CD4-positive, alpha-beta memory T cell (primary cell): ENCODE measurements at regions of chr6 and their contacts with region 1.

Region 1: DNA sequence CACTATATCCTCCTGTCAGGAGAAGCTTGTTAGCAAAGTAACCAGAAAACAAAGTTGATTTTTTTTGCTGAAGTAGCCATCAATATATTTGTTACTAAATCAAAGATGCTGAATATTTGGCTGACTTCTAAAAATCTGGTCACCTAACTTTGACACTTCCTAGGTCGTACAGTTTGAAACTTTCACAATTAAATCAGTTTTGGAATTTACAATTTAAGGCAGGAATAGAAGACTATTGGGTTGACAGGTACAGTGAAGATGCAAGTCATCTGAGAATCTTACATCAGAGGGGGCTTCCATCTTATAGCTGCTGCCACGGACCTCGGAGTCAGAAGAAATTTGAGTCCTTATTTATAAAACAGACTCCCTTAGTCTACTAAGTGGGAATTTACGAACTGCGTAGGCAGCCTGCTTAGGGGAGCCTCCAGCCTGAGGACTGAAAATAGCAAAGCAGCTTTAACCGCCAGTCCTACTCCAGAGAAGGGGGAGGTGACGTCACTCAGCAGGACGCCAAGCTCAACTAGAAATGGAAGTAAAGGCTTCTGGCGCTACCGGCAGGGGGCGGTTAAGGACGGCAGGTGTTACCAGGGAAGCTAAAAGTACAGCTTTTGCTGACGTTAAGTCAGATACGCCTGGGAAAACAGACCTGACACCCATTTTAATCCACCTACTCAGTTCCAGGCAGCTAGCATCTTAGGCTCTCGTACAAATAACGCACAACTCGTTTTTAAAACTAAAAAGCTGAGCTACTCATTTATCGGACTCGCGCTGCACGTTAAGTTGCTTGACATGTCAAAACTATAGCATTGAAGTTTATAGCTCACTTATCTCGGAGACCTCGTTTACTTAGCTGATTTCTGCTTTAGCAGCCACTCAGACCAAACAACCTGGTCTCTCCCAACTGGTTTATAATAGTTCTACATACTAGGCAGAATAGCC is 61.1 kb upstream of the HFE start:
- DNase-seq: peak; percentile 90 to 98 (median 94)
- H3K4me3 ChIP-seq: peak overlapping the region; percentile 67 to 74
- H3K4me3 Mint-ChIP-seq: peak overlapping the region; percentile 85 to 98 (median 92)
- H3K27ac ChIP-seq: peak overlapping the region; percentile 89
- H3K27ac Mint-ChIP-seq: peak overlapping the region; percentile 96 to 100 (median 99)
- H3K4me1 ChIP-seq: peaks cover 29% of the 10 kb centered on the region
- H3K4me1 Mint-ChIP-seq: peaks cover 22 to 60% (median 39%) of the 10 kb centered on the region in 4 donors
- H3K27me3 ChIP-seq: no peaks in the 10 kb centered on the region
- H3K27me3 Mint-ChIP-seq: peaks cover 0 to 4% of the 10 kb centered on the region in 2 donors

Region 2: GRCh38 chr6:25962149-25963127 is 63.7 kb before region 1 on chr6 and contains the start of gene TRIM38:
- CTCF ChIA-PET with region 1: no interaction called
- POLR2A ChIA-PET with region 1: interaction called, 41 read pairs
- intact Hi-C with region 1: no loop called
- DNase-seq: peak; percentile 82 to 95 (median 87)
- H3K4me3 ChIP-seq: peak within 1 kb of the TSS; percentile 66 to 90
- H3K4me3 Mint-ChIP-seq: peak within 1 kb of the TSS; percentile 98 to 100 (median 98)
- H3K27ac ChIP-seq: peak within 1 kb of the TSS; percentile 92
- H3K27ac Mint-ChIP-seq: peak within 1 kb of the TSS; percentile 92 to 100 (median 99)
- H3K4me1 ChIP-seq: peaks cover 84% of the 10 kb centered on the region
- H3K4me1 Mint-ChIP-seq: peaks cover 64 to 93% (median 79%) of the 10 kb centered on the region in 4 donors
- H3K27me3 ChIP-seq: no peaks in the 10 kb centered on the region
- H3K27me3 Mint-ChIP-seq: no peaks in the 10 kb centered on the region
- total RNA-seq, gene TRIM38: 37.7 TPM

Region 3: GRCh38 chr6:26054857-26055669 is 28.9 kb after region 1 on chr6:
- CTCF ChIA-PET with region 1: interaction called, 16 read pairs
- POLR2A ChIA-PET with region 1: interaction called, 1,198 read pairs
- intact Hi-C with region 1: loop called (anchors 1 kb)
- DNase-seq: peak; percentile 89 to 96 (median 91)
- H3K4me3 ChIP-seq: peak overlapping the region; percentile 67 to 78
- H3K4me3 Mint-ChIP-seq: peak overlapping the region; percentile 93 to 96 (median 94)
- H3K27ac ChIP-seq: peak overlapping the region; percentile 84
- H3K27ac Mint-ChIP-seq: peak overlapping the region; percentile 91 to 98 (median 98)
- H3K4me1 ChIP-seq: peaks cover 24% of the 10 kb centered on the region
- H3K4me1 Mint-ChIP-seq: peaks cover 7 to 34% (median 15%) of the 10 kb centered on the region in 4 donors
- H3K27me3 ChIP-seq: no peaks in the 10 kb centered on the region
- H3K27me3 Mint-ChIP-seq: no peaks in the 10 kb centered on the region

Region 4: DNA sequence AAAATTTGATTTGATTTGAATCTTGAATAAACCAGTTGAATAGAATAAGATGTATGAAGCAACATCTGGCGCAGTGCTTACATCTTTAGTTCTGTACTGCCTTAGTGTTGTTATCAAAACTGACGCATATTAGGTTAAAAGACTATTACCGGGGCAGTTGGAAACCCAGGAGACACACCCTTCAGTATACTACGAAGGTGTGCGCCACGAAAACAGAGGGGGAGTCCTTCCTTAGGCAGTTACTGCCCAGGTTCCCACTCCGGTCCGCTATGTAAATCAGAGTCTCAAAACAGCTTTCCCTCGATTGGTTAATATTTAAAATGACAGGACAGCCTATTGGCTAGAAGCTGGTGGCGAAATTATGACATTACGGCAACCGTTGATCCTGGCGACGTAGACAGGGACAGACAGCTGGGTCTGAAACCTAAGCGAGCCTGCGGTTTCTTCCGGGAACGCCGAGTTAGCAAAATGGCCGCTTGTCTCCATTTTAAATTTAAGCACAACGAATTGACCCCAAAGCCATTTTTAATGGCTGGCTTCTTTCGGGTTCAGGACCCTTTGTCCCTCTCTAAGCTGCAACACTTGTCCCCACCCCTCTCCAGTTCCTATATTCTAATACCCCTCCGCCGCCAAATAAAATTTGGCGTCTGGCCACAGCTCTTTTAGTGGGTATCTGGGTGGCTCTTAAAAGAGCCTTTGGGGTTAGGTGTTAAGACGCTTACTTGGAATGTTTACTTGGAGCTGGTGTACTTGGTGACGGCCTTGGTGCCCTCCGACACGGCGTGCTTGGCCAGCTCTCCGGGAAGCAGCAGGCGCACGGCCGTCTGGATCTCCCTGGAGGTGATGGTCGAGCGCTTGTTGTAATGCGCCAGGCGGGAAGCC is 96.9 kb after region 1 on chr6:
- CTCF ChIA-PET with region 1: interaction called, 17 read pairs
- POLR2A ChIA-PET with region 1: interaction called, 147 read pairs
- intact Hi-C with region 1: loop called (anchors 1 kb)
- DNase-seq: peak; percentile 94 to 98 (median 98)
- H3K4me3 ChIP-seq: peak overlapping the region; percentile 87 to 98
- H3K4me3 Mint-ChIP-seq: peak overlapping the region; percentile 96 to 100 (median 100)
- H3K27ac ChIP-seq: peak overlapping the region; percentile 89
- H3K27ac Mint-ChIP-seq: peak overlapping the region; percentile 97 to 99 (median 99)
- H3K4me1 ChIP-seq: peaks cover 26% of the 10 kb centered on the region
- H3K4me1 Mint-ChIP-seq: peaks cover 20 to 54% (median 30%) of the 10 kb centered on the region in 4 donors
- H3K27me3 ChIP-seq: no peaks in the 10 kb centered on the region
- H3K27me3 Mint-ChIP-seq: peaks cover 0 to 3% of the 10 kb centered on the region in 2 donors

Region 5: GRCh38 chr6:26216356-26216885 is 190.3 kb after region 1 on chr6:
- CTCF ChIA-PET with region 1: interaction called, 5 read pairs
- POLR2A ChIA-PET with region 1: interaction called, 47 read pairs
- intact Hi-C with region 1: loop called (anchors 5 kb)
- DNase-seq: peak; percentile 88 to 96 (median 94)
- H3K4me3 ChIP-seq: peak overlapping the region; percentile 75 to 85
- H3K4me3 Mint-ChIP-seq: no peak overlapping the region
- H3K27ac ChIP-seq: peak overlapping the region; percentile 82
- H3K27ac Mint-ChIP-seq: no peak overlapping the region
- H3K4me1 ChIP-seq: peaks cover 26% of the 10 kb centered on the region
- H3K4me1 Mint-ChIP-seq: peaks cover 0 to 5% (median 2%) of the 10 kb centered on the region in 4 donors
- H3K27me3 ChIP-seq: no peaks in the 10 kb centered on the region
- H3K27me3 Mint-ChIP-seq: no peaks in the 10 kb centered on the region

Region 6: GRCh38 chr6:27132532-27133280 is 1106.5 kb after region 1 on chr6:
- CTCF ChIA-PET with region 1: no interaction called
- POLR2A ChIA-PET with region 1: interaction called, 38 read pairs
- intact Hi-C with region 1: loop called (anchors 5 kb)
- DNase-seq: peak; percentile 96 to 99 (median 98)
- H3K4me3 ChIP-seq: peak overlapping the region; percentile 72 to 90
- H3K4me3 Mint-ChIP-seq: no peak overlapping the region
- H3K27ac ChIP-seq: peak overlapping the region; percentile 93
- H3K27ac Mint-ChIP-seq: no peak overlapping the region
- H3K4me1 ChIP-seq: peaks cover 27% of the 10 kb centered on the region
- H3K4me1 Mint-ChIP-seq: peaks cover 0 to 24% (median 10%) of the 10 kb centered on the region in 4 donors
- H3K27me3 ChIP-seq: no peaks in the 10 kb centered on the region
- H3K27me3 Mint-ChIP-seq: no peaks in the 10 kb centered on the region

Region 7: GRCh38 chr6:27825025-27825793 is 1799.0 kb after region 1 on chr6:
- CTCF ChIA-PET with region 1: interaction called, 3 read pairs
- POLR2A ChIA-PET with region 1: interaction called, 15 read pairs
- intact Hi-C with region 1: loop called (anchors 10 kb)
- DNase-seq: no peak
- H3K4me3 ChIP-seq: peak overlapping the region; percentile 62 to 79
- H3K4me3 Mint-ChIP-seq: peak overlapping the region; percentile 88 to 98 (median 92)
- H3K27ac ChIP-seq: peak overlapping the region; percentile 66
- H3K27ac Mint-ChIP-seq: peak overlapping the region; percentile 91 to 100 (median 98)
- H3K4me1 ChIP-seq: peaks cover 29% of the 10 kb centered on the region
- H3K4me1 Mint-ChIP-seq: peaks cover 16 to 43% (median 31%) of the 10 kb centered on the region in 4 donors
- H3K27me3 ChIP-seq: no peaks in the 10 kb centered on the region
- H3K27me3 Mint-ChIP-seq: no peaks in the 10 kb centered on the region